Activated naive CD4-positive, alpha-beta T cell treated with anti-CD3 and anti-CD28 coated beads for 36 hours (primary cell): ENCODE measurements at regions of chr15 and their contacts with region 1.

Region 1: GRCh38 chr15:45198337-45199135 is 10.8 kb upstream of the SHF start:
- DNase-seq: peak; percentile 97
- H3K4me3 Mint-ChIP-seq: no peak overlapping the region
- H3K27ac Mint-ChIP-seq: no peak overlapping the region
- H3K4me1 Mint-ChIP-seq: peaks cover 5% of the 10 kb centered on the region
- H3K27me3 Mint-ChIP-seq: peaks cover 2% of the 10 kb centered on the region

Region 2: GRCh38 chr15:44633603-44634002 is 564.9 kb before region 1 on chr15:
- CTCF ChIA-PET with region 1: no interaction called
- intact Hi-C with region 1: loop called (anchors 1 kb)
- DNase-seq: peak; percentile 34
- H3K4me3 Mint-ChIP-seq: peak overlapping the region; percentile 65
- H3K27ac Mint-ChIP-seq: peak overlapping the region; percentile 98
- H3K4me1 Mint-ChIP-seq: peaks cover 34% of the 10 kb centered on the region
- H3K27me3 Mint-ChIP-seq: no peaks in the 10 kb centered on the region

Region 3: GRCh38 chr15:45118131-45118588 is 80.4 kb before region 1 on chr15:
- CTCF ChIA-PET with region 1: interaction called, 6 read pairs
- intact Hi-C with region 1: loop called (anchors 2 kb)
- DNase-seq: peak; percentile 93
- H3K4me3 Mint-ChIP-seq: peak overlapping the region; percentile 50
- H3K27ac Mint-ChIP-seq: no peak overlapping the region
- H3K4me1 Mint-ChIP-seq: peaks cover 32% of the 10 kb centered on the region
- H3K27me3 Mint-ChIP-seq: peaks cover 60% of the 10 kb centered on the region

Region 4: DNA sequence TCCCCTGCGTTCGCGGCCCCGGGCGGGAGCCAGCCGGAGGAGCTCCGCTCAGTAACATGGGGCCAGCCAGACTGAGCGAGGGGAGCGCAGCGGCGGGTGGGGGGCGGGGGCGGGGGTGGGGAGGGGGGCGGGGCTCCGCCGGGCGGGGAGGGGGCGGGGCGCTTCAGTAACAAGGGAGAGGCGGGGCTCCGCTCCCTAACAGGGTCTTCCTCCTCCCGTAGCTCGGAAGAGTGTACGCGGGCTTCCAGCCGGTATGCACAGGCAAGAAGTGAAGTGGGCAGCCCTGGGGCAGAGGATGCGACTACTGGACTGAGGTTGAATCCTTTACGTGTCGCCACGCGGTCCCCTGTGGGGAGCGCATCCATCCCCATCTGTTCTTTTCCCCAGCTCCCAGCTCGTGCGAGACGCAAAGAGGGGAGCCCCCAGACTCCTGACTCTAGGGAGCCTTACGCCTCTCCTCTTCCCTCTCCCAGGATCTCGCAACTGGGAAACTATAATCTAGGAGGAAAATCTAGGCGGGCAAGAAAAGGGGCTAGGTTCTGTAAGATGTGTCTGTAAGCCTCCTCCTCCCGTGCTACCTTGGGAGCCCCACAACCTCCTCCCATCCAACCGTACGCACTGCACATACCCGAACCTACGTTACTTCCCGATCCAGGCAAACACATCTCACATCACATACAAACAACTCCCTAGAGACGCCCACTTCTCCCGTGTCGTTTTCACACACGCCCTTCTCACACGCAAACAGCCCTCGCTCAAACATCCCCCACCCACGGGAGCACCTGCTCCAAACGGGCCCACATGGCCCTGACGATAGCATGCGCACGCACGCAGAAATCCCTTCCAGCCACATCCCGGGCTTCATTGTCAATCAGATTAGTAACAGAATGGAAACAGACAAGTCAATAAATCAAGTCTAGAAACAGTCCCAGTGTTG is 10.4 kb before region 1 on chr15 and contains the start of gene SHF:
- CTCF ChIA-PET with region 1: interaction called, 7 read pairs
- intact Hi-C with region 1: loop called (anchors 1 kb)
- DNase-seq: peak; percentile 83
- H3K4me3 Mint-ChIP-seq: peak within 1 kb of the TSS; percentile 87
- H3K27ac Mint-ChIP-seq: peak within 1 kb of the TSS; percentile 91
- H3K4me1 Mint-ChIP-seq: peaks cover 22% of the 10 kb centered on the region
- H3K27me3 Mint-ChIP-seq: no peaks in the 10 kb centered on the region
- total RNA-seq, gene SHF: 2.3 to 3.3 TPM

Region 5: GRCh38 chr15:45291822-45292582 is 93.5 kb after region 1 on chr15:
- CTCF ChIA-PET with region 1: no interaction called
- intact Hi-C with region 1: no loop called
- DNase-seq: no peak
- H3K4me3 Mint-ChIP-seq: no peak overlapping the region
- H3K27ac Mint-ChIP-seq: no peak overlapping the region
- H3K4me1 Mint-ChIP-seq: no peaks in the 10 kb centered on the region
- H3K27me3 Mint-ChIP-seq: peaks cover 2% of the 10 kb centered on the region

Region 6: DNA sequence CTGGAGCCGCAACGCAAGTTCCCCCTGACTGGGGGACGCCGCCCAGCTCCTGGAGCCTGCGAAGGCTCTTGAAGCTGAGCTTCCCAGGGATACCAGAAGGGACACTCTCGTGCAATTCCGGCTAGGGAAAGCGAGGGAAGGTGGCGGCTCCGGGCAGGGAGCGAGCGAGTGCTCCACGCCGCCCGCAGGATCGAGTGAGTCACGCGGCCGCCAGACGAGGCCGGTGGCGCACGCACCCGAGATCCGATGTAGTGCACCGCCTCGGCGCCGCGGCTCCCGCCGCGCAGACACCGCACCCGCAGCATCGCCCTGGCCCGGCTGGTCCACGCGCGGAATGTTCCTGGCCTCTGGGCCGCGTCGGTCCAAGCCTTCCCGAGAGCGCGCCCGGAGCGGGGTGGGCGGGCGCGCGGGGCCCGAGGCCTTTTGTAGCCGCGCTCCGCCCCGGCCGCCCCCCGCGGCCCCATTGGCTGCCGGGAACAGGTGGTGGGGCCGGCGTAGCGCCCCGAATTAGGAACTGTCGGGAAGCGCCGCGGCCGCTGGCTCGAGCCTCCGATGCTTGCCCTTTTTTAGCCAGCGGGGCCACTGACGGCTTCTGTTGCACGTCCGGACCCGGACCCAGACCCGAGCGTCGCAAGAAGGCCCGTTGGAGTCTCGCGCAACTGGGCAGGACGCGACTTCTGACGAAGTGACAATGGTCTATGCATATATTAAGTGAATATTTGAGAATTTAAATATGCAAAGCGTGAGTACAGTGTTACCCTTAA is 179.8 kb after region 1 on chr15 and contains the start of gene GATM:
- CTCF ChIA-PET with region 1: no interaction called
- intact Hi-C with region 1: loop called (anchors 1 kb)
- DNase-seq: peak; percentile 59
- H3K4me3 Mint-ChIP-seq: peak within 1 kb of the TSS; percentile 74
- H3K27ac Mint-ChIP-seq: no peak within 1 kb of the TSS
- H3K4me1 Mint-ChIP-seq: peaks cover 9% of the 10 kb centered on the region
- H3K27me3 Mint-ChIP-seq: peaks cover 39% of the 10 kb centered on the region
- total RNA-seq, gene GATM: 0.91 to 1.2 TPM

Region 7: GRCh38 chr15:45587095-45587860 is 388.7 kb after region 1 on chr15 and contains the start of gene BLOC1S6:
- CTCF ChIA-PET with region 1: interaction called, 3 read pairs
- intact Hi-C with region 1: loop called (anchors 1 kb)
- DNase-seq: peak; percentile 91
- H3K4me3 Mint-ChIP-seq: peak within 1 kb of the TSS; percentile 100
- H3K27ac Mint-ChIP-seq: peak within 1 kb of the TSS; percentile 100
- H3K4me1 Mint-ChIP-seq: peaks cover 41% of the 10 kb centered on the region
- H3K27me3 Mint-ChIP-seq: no peaks in the 10 kb centered on the region
- total RNA-seq, gene BLOC1S6: 36.8 to 42.8 TPM